H1 (cell line): ENCODE measurements at regions of chr1 and their contacts with region 1.

Region 1: DNA sequence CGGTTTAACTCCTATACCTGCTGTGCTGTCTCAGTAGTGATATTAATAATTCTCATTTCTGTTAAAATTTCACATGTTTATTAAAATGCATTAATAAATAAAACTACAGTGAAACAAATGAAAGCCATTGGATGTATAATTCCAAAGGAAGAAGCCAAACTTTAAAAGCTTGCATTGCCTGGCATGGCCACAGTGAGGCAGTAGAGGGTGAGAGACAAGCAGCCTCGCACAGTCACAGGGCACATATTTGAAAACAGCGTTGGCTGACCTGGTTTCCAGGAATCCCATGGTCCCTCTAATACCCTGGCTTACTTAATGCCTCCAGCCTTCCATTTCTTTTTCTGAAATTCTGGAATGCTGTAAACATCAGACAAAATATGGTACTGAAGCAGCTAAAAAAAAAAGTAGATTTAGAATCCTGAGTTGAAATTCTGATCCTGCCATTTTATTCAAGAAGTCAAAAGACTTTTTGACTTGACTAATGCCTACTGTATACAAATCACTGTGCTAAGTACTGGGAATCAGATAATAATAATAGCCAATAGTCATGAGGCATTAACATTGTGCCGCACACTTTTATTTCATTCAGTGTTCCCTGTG is 6.7 kb upstream of the RNASEL start:
- DNase-seq: peak in 1 of 2 experiments; percentile 90
- H3K4me3 ChIP-seq: no peak overlapping the region
- H3K27ac ChIP-seq: no peak overlapping the region
- H3K4me1 ChIP-seq: no peaks in the 10 kb centered on the region
- H3K27me3 ChIP-seq: no peaks in the 10 kb centered on the region
- CTCF ChIP-seq: peak; percentile 78 to 92 (median 87)
- EP300 ChIP-seq: no peak
- POLR2A ChIP-seq: no peak
- RAD21 ChIP-seq: peak; percentile 84 to 89

Region 2: DNA sequence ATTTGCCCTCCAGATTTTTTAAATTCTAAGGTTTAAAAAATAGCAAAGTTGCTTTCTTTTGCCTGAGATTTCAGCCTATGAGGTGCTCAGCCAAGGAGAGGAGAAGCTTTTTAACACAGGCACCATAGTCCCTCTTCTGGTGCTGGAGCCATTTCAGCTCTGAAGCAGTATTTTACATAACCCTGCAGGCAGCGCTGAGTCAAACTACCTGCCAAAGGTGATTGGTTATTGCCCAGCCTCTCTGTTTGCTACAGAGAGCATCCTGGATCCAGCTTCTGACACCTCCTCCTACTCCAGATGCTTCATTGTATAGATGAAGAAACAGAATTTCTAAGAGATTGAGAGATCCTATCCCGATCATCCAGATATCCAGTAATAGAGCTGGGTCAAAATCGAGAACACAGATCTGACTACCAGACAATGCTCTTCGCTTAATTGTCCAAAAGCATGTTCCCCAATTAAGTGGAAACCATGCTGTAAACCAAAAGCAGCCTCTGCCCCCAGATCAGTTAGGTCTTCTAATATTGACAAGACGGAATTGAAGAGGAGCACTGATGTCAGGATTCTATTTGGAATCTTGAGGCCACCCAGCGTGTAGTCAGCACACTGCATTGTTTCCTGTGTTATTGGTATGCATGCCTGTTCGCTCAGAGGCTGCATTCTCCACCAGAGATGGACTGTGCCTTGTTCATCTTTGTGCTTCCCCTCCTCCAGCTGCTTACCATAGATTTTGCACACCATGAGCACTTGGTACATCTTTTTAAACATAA is 66.6 kb after region 1 on chr1:
- CTCF ChIA-PET with region 1: interaction called, 28 read pairs
- POLR2A ChIA-PET with region 1: interaction called, 3 read pairs
- DNase-seq: no peak
- H3K4me3 ChIP-seq: peak overlapping the region in 1 of 4 experiments; percentile 35; a peak in 2 of 8 replicates
- H3K27ac ChIP-seq: no peak overlapping the region
- H3K4me1 ChIP-seq: peaks cover 5 to 21% (median 17%) of the 10 kb centered on the region in 4 experiments; a peak in 6 of 7 replicates
- H3K27me3 ChIP-seq: peaks cover 0 to 3% (median 0%) of the 10 kb centered on the region in 4 experiments; a peak in 2 of 7 replicates
- CTCF ChIP-seq: no peak
- EP300 ChIP-seq: no peak
- POLR2A ChIP-seq: no peak
- RAD21 ChIP-seq: no peak; a peak in 1 of 4 replicates

Region 3: GRCh38 chr1:182680901-182681567 is 85.3 kb after region 1 on chr1:
- CTCF ChIA-PET with region 1: interaction called, 11 read pairs
- POLR2A ChIA-PET with region 1: interaction called, 3 read pairs
- DNase-seq: no peak
- H3K4me3 ChIP-seq: no peak overlapping the region
- H3K27ac ChIP-seq: no peak overlapping the region
- H3K4me1 ChIP-seq: peaks cover 0 to 16% (median 4%) of the 10 kb centered on the region in 4 experiments; a peak in 6 of 7 replicates
- H3K27me3 ChIP-seq: peaks cover 0 to 19% (median 8%) of the 10 kb centered on the region in 4 experiments; a peak in 4 of 7 replicates
- CTCF ChIP-seq: no peak
- EP300 ChIP-seq: no peak
- POLR2A ChIP-seq: no peak
- RAD21 ChIP-seq: no peak

Region 4: DNA sequence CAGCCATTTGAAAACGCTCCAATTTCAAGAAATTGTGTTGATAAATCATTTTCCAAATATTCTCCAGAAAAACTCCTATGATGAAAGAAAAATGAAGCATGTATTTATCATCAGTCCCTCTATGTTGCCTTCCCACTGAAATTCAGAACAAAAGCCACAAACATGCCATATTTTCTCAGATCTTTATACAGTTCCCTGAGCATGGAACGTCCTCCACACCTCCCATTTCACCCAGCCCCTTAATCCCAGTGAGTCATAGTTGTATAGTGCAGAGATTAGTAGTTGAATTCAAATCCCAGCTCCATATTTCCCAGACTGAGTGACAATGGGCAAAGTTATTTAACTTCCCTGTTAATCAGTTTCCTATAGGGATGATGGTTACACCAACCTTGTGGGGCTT is 173.2 kb after region 1 on chr1:
- CTCF ChIA-PET with region 1: interaction called, 24 read pairs
- POLR2A ChIA-PET with region 1: interaction called, 5 read pairs
- DNase-seq: no peak
- H3K4me3 ChIP-seq: no peak overlapping the region
- H3K27ac ChIP-seq: no peak overlapping the region
- H3K4me1 ChIP-seq: peaks cover 0 to 8% (median 4%) of the 10 kb centered on the region in 4 experiments; a peak in 4 of 7 replicates
- H3K27me3 ChIP-seq: peaks cover 0 to 1% (median 0%) of the 10 kb centered on the region in 4 experiments; a peak in 1 of 7 replicates
- CTCF ChIP-seq: no peak
- EP300 ChIP-seq: no peak
- POLR2A ChIP-seq: no peak
- RAD21 ChIP-seq: no peak